ENCODE measurements at regions of chr5 and their contacts with region 1.

Region 1: GRCh38 chr5:140000332-140000731 is 42.8 kb downstream of the NRG2 start:
- DNase-seq: no peak

Region 2: DNA sequence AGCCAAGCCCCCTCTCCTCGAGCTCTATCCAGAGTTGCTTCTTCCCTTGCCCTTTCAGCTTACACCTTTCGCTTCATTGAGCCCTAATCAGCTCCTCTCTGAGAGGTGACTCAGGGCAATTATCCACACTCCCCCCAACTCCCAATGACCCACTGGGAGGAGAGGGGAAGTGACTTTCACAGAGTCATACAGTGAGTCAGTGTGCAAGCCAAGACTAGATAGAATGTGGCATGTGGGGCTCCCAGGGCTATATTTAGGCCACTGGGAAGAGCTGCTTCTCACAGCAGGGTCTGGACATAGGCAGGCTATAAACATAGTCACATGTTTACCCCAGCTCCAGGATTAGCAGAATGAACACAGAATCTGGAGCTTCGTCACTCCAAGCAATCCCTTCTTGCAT is 14.6 kb before region 1 on chr5:
- intact Hi-C with region 1: loop called (anchors 2 kb)
- DNase-seq: no peak